ENCODE measurements at regions of chr17 and their contacts with region 1.

Region 1: GRCh38 chr17:43104665-43105064 is 20.5 kb downstream of the BRCA1 start:
- DNase-seq: no peak
- H3K4me3 ChIP-seq: no peak overlapping the region
- H3K27ac ChIP-seq: no peak overlapping the region
- H3K4me1 ChIP-seq: no peaks in the 10 kb centered on the region
- H3K27me3 ChIP-seq: no peaks in the 10 kb centered on the region
- CTCF ChIP-seq: no peak

Region 2: GRCh38 chr17:42997390-42997983 is 107.2 kb before region 1 on chr17:
- intact Hi-C with region 1: no loop called
- DNase-seq: no peak
- H3K4me3 ChIP-seq: peak overlapping the region; percentile 16
- H3K27ac ChIP-seq: peak overlapping the region; percentile 77
- H3K4me1 ChIP-seq: peaks cover 18% of the 10 kb centered on the region
- H3K27me3 ChIP-seq: no peaks in the 10 kb centered on the region
- CTCF ChIP-seq: no peak

Region 3: DNA sequence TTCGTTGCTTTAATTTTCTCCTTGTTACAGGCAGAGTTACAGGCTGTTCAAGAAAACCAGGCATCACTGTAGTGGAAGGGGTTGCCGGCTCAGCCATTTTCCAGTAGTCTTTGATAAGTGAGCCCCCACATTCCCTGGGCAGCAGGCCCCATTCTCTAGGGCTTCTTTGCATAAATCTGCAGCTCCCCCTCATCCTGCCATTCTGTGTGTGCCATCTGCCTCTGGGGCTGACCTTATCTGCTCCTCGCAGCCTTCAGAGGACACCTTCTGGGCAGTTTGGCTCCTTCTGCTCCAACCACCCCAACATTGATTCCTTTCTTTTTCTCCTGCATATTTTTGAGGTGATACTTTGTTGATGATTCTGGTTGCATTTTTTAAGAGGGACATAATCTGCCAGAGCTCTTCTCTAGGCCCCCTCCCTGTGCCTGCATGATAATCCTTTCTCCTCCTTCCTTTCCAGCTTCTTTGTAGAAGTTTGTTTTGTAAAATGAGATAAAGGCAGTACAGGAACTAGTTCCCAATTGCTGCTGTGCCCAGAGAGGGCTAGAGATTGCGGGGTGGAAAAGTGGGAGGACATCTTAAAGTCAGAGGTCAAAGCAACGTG is 62.5 kb before region 1 on chr17:
- intact Hi-C with region 1: loop called (anchors 10 kb)
- DNase-seq: no peak
- H3K4me3 ChIP-seq: no peak overlapping the region
- H3K27ac ChIP-seq: no peak overlapping the region
- H3K4me1 ChIP-seq: no peaks in the 10 kb centered on the region
- H3K27me3 ChIP-seq: no peaks in the 10 kb centered on the region
- CTCF ChIP-seq: no peak

Region 4: GRCh38 chr17:43224146-43224695 is 119.6 kb after region 1 on chr17:
- intact Hi-C with region 1: no loop called
- DNase-seq: peak; percentile 3
- H3K4me3 ChIP-seq: no peak overlapping the region
- H3K27ac ChIP-seq: no peak overlapping the region
- H3K4me1 ChIP-seq: no peaks in the 10 kb centered on the region
- H3K27me3 ChIP-seq: no peaks in the 10 kb centered on the region
- CTCF ChIP-seq: no peak

Measured in colonic mucosa (tissue), 4 donors.